A549 (cell line): ENCODE measurements at regions of chr7 and their contacts with region 1.

Region 1: DNA sequence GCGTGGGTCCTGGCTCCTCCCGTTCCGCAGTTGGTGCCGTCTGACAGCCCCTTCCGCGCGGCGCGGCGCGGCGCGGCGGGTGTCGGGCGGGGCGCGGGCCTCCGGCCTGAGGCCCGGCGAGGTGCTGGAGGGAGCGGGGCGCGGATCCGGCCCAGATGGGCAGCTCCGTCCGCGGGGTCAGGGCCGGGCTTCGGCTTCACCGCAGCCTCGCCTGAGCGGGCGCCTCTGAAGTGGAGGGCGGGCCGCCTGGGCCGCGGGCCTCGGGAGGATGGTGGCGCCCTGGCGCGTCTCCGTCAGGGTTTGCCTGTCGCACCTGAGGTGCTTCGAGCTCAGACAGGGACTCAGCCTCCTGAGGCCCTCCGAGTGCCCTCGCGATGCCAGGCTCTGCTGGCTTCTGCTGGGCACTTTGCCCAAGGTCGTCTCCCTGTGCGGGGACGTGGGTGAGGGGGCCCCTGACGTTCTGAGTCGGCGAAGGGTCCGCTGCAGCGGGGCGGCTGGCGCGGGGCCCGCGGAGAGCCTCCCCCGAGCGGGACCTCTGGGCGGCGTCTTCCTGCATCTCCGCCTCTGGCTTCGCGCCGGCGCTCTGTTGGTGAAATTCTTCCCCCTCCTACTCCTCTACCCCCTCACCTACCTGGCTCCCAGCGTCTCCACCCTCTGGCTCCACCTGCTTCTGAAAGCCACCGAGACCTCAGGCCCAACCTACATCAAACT is 473 bp downstream of the ADCK2 start:
- DNase-seq: peak; percentile 33 to 61
- ATAC-seq: peak; percentile 78
- H3K4me3 ChIP-seq: peak overlapping the region; percentile 80
- H3K27ac ChIP-seq: peak overlapping the region; percentile 81 to 89
- H3K4me1 ChIP-seq: peaks cover 15% of the 10 kb centered on the region; the same call in 1 of the 3 replicates
- CTCF ChIP-seq: no peak
- EP300 ChIP-seq: no peak
- POLR2A ChIP-seq: no peak
- RAD21 ChIP-seq: no peak

Region 2: GRCh38 chr7:140661121-140661520 is 12.1 kb before region 1 on chr7:
- CTCF ChIA-PET with region 1: interaction called, 19 read pairs
- POLR2A ChIA-PET with region 1: no interaction called
- DNase-seq: peak in 1 of 2 experiments; percentile 28
- ATAC-seq: peak; percentile 70 to 86; a peak in 5 of 6 replicates
- H3K4me3 ChIP-seq: no peak overlapping the region
- H3K27ac ChIP-seq: no peak overlapping the region
- H3K4me1 ChIP-seq: no peaks in the 10 kb centered on the region
- CTCF ChIP-seq: no peak; the same call in 2 of the 3 replicates
- EP300 ChIP-seq: no peak
- POLR2A ChIP-seq: no peak
- RAD21 ChIP-seq: peak; percentile 50 to 62

Region 3: DNA sequence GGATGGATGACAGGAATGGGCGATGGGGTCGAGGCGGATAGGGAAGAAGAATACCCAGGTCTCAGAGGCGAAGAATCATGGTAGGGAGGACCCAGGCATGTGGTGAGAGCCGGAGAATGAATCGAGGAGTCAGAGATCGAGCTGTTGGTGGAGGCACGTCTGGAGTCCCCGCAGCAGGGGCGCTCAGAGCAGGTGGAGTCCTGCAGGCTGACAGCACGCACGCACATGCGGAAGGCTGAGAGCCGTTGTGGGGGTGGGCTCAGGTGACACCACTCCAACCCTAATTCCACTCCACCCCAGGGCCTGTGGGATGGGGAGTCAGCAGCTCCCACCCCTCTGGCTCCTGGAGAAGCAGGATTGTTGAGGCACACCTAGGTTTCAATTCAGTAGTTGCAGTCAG is 11.3 kb after region 1 on chr7:
- CTCF ChIA-PET with region 1: interaction called, 10 read pairs
- POLR2A ChIA-PET with region 1: no interaction called
- DNase-seq: no peak
- ATAC-seq: no peak
- H3K4me3 ChIP-seq: no peak overlapping the region
- H3K27ac ChIP-seq: no peak overlapping the region
- H3K4me1 ChIP-seq: no peaks in the 10 kb centered on the region
- CTCF ChIP-seq: no peak
- EP300 ChIP-seq: no peak
- POLR2A ChIP-seq: no peak
- RAD21 ChIP-seq: no peak